ENCODE measurements at regions of chr14 and their contacts with region 1.

Region 1: DNA sequence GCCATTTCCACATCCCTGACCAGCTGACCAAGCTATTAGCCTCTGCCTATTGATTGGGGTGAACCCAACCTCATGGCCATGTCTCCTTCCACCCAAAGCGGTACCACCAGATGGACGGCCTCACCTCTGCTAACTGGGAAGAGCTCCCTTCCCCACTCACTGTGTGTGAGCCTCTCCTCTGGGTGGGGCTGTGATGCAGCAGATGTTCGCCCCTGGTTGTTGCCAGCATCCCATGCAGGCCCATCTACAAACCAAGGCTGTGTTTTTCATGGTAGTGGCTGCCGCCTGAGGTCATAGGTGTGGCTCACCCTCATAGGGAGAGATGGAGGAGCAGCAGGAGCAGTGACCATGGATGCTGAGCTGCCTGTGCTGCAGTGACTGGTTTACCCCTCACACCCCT is 47.6 kb upstream of the RD3L start:
- DNase-seq: no peak
- H3K4me3 ChIP-seq: no peak overlapping the region
- H3K27ac ChIP-seq: no peak overlapping the region
- H3K4me1 ChIP-seq: no peaks in the 10 kb centered on the region
- H3K27me3 ChIP-seq: no peaks in the 10 kb centered on the region
- CTCF ChIP-seq: no peak

Region 2: GRCh38 chr14:103808403-103809001 is 181.5 kb before region 1 on chr14:
- CTCF ChIA-PET with region 1: no interaction called
- dilution Hi-C with region 1: no loop called
- in situ Hi-C with region 1: loop called (anchors 10 kb)
- intact Hi-C with region 1: no loop called
- DNase-seq: peak; percentile 54
- H3K4me3 ChIP-seq: no peak overlapping the region
- H3K27ac ChIP-seq: no peak overlapping the region
- H3K4me1 ChIP-seq: peaks cover 11% of the 10 kb centered on the region
- H3K27me3 ChIP-seq: no peaks in the 10 kb centered on the region
- CTCF ChIP-seq: peak; percentile 83 to 92

Region 3: GRCh38 chr14:103905842-103906456 is 84.0 kb before region 1 on chr14:
- CTCF ChIA-PET with region 1: no interaction called
- dilution Hi-C with region 1: no loop called
- in situ Hi-C with region 1: no loop called
- intact Hi-C with region 1: no loop called
- DNase-seq: no peak
- H3K4me3 ChIP-seq: no peak overlapping the region
- H3K27ac ChIP-seq: no peak overlapping the region
- H3K4me1 ChIP-seq: peaks cover 8% of the 10 kb centered on the region
- H3K27me3 ChIP-seq: no peaks in the 10 kb centered on the region
- CTCF ChIP-seq: no peak

Region 4: DNA sequence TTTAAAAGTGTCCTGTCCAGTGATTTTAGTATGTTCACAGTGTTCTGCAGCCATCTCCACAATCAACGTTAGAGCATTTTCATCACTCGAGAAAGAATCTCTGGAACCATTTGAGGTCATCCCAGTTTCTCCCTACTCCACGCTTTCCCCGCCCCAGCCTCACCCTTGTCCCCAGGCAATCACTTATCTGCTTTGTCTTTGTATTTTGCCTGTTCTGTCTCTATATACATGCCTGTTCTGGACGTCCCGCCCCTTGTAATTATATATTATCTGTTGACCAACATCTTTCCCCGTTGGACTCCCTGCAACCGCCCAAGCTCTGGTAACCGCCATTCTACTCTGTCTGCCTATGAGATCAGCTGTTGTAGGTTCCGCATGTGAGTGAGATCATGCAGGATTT is 74.0 kb after region 1 on chr14:
- CTCF ChIA-PET with region 1: no interaction called
- dilution Hi-C with region 1: no loop called
- in situ Hi-C with region 1: no loop called
- intact Hi-C with region 1: no loop called
- DNase-seq: no peak
- H3K4me3 ChIP-seq: no peak overlapping the region
- H3K27ac ChIP-seq: no peak overlapping the region
- H3K4me1 ChIP-seq: no peaks in the 10 kb centered on the region
- H3K27me3 ChIP-seq: no peaks in the 10 kb centered on the region
- CTCF ChIP-seq: no peak

Region 5: GRCh38 chr14:104169699-104170479 is 179.9 kb after region 1 on chr14:
- CTCF ChIA-PET with region 1: no interaction called
- dilution Hi-C with region 1: no loop called
- in situ Hi-C with region 1: no loop called
- intact Hi-C with region 1: no loop called
- DNase-seq: no peak
- H3K4me3 ChIP-seq: no peak overlapping the region
- H3K27ac ChIP-seq: no peak overlapping the region
- H3K4me1 ChIP-seq: peaks cover 5% of the 10 kb centered on the region
- H3K27me3 ChIP-seq: no peaks in the 10 kb centered on the region
- CTCF ChIP-seq: no peak

Measured in mammary epithelial cell (primary cell).